ENCODE measurements at regions of chr11 and their contacts with region 1.

Region 1: DNA sequence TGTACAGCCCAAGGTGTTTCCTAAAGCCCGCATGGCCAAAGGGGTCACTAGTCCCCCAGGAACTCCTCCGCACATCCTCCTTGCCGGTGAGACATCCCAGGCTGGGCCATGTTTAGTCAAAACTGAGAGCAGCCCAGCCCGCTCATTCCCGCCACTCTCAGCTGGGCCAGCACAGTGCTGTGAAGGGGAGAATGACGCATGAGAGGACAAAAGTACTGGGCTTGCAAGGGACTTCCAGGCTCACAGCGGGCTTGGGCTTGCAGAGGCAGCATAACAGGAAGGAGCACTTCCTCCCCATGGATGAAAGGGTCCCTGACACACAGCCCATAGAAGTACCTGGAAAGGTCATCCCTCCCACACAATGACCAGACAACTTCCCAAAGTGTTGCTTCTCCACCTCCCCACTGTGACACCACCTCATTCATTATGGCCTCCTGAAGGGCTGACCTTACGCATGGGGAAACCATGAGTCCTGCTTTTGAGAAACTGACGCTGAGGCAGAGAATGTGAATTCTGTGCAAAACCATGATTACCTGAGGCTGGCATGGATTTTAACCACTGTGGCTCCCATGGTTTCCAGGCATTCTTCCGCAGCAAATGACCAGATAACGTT is 19.1 kb downstream of the ETS1 start:
- DNase-seq: peak in 1 of 2 donors; percentile 70
- ATAC-seq: peak; percentile 65 to 95 (median 88)
- H3K4me3 ChIP-seq: no peak overlapping the region
- H3K27ac ChIP-seq: peak overlapping the region; percentile 55 to 82 (median 68)
- H3K4me1 ChIP-seq: peaks cover 3 to 74% (median 38%) of the 10 kb centered on the region in 9 donors
- H3K27me3 ChIP-seq: no peaks in the 10 kb centered on the region
- CTCF ChIP-seq: no peak

Region 2: GRCh38 chr11:128610721-128611617 is 42.7 kb after region 1 on chr11:
- intact Hi-C with region 1: loop called in 1 of 10 experiments (anchors 1 kb)
- DNase-seq: peak in 1 of 2 donors; percentile 63
- ATAC-seq: peak; percentile 36 to 86 (median 66)
- H3K4me3 ChIP-seq: peak overlapping the region in 1 of 10 donors; percentile 18
- H3K27ac ChIP-seq: peak overlapping the region in 8 of 10 donors; percentile 45 to 82 (median 66)
- H3K4me1 ChIP-seq: peaks cover 0 to 55% (median 34%) of the 10 kb centered on the region in 9 donors
- H3K27me3 ChIP-seq: no peaks in the 10 kb centered on the region
- CTCF ChIP-seq: no peak

Region 3: GRCh38 chr11:128624269-128625175 is 56.2 kb after region 1 on chr11:
- intact Hi-C with region 1: loop called in 1 of 10 experiments (anchors 5 kb)
- DNase-seq: no peak
- ATAC-seq: no peak
- H3K4me3 ChIP-seq: no peak overlapping the region
- H3K27ac ChIP-seq: peak overlapping the region in 1 of 10 donors; percentile 80
- H3K4me1 ChIP-seq: peaks cover 0 to 84% (median 14%) of the 10 kb centered on the region in 9 donors
- H3K27me3 ChIP-seq: no peaks in the 10 kb centered on the region
- CTCF ChIP-seq: no peak